CD4-positive, alpha-beta memory T cell (primary cell): ENCODE measurements at regions of chr19 and their contacts with region 1.

Region 1: GRCh38 chr19:49473868-49474544 is at the start of gene FLT3LG:
- DNase-seq: peak; percentile 96 to 97 (median 97)
- H3K4me3 ChIP-seq: peak within 1 kb of the TSS; percentile 77 to 94
- H3K4me3 Mint-ChIP-seq: peak within 1 kb of the TSS; percentile 90 to 99 (median 94)
- H3K27ac ChIP-seq: peak within 1 kb of the TSS; percentile 96
- H3K27ac Mint-ChIP-seq: peak within 1 kb of the TSS; percentile 91 to 99 (median 98)
- H3K4me1 ChIP-seq: peaks cover 64% of the 10 kb centered on the region
- H3K4me1 Mint-ChIP-seq: peaks cover 27 to 71% (median 46%) of the 10 kb centered on the region in 4 donors
- H3K27me3 ChIP-seq: no peaks in the 10 kb centered on the region
- H3K27me3 Mint-ChIP-seq: no peaks in the 10 kb centered on the region
- total RNA-seq, gene FLT3LG: 114 to 115 TPM

Region 2: GRCh38 chr19:49391581-49392399 is 82.2 kb before region 1 on chr19:
- CTCF ChIA-PET with region 1: interaction called, 57 read pairs
- POLR2A ChIA-PET with region 1: interaction called, 20 read pairs
- intact Hi-C with region 1: loop called (anchors 1 kb)
- DNase-seq: peak; percentile 76 to 80 (median 78)
- H3K4me3 ChIP-seq: no peak overlapping the region
- H3K4me3 Mint-ChIP-seq: no peak overlapping the region
- H3K27ac ChIP-seq: no peak overlapping the region
- H3K27ac Mint-ChIP-seq: peak overlapping the region in 6 of 7 donors; percentile 9 to 85 (median 60)
- H3K4me1 ChIP-seq: peaks cover 21% of the 10 kb centered on the region
- H3K4me1 Mint-ChIP-seq: peaks cover 8 to 24% (median 11%) of the 10 kb centered on the region in 4 donors
- H3K27me3 ChIP-seq: no peaks in the 10 kb centered on the region
- H3K27me3 Mint-ChIP-seq: no peaks in the 10 kb centered on the region

Region 3: DNA sequence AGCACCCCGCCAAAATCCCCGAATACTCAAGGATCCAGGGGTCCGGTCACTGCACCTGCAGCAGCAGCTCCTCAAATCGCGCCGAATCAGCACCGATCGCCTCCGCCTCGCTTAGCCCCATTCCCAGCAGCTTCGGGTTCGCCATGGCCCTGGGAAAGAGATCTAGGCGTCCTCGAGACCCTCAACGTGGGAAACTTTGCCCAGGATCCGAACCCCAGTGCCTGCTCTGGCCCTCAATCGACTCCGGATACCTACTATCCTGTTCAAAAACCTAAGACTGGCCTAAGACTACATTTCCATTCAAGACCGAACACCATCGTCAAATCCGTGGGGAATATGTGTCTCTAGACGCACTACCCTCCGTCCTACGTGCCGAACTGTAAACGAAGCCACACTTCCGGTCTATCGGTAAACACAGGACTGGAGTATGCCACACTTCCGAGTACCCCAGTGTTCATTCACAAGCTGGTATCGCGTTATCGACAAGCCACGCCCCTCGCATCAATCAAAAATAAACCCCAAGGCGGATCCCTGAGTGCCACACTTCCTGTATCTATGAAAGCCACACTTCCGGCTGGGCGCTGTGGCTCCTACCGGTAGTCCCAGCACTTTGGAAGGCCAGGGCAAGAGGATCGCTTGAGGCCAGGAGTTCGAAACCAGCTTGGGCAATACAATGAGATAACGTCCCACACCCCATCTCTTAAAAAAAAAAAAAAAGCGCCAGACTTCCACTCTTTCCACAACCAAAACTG is 22.4 kb before region 1 on chr19 and contains the start of gene PIH1D1:
- CTCF ChIA-PET with region 1: interaction called, 227 read pairs
- POLR2A ChIA-PET with region 1: interaction called, 222 read pairs
- intact Hi-C with region 1: loop called (anchors 1 kb)
- DNase-seq: peak; percentile 91 to 98 (median 95)
- H3K4me3 ChIP-seq: peak within 1 kb of the TSS; percentile 66 to 90
- H3K4me3 Mint-ChIP-seq: peak within 1 kb of the TSS; percentile 91 to 100 (median 99)
- H3K27ac ChIP-seq: peak within 1 kb of the TSS; percentile 91
- H3K27ac Mint-ChIP-seq: peak within 1 kb of the TSS; percentile 96 to 100 (median 100)
- H3K4me1 ChIP-seq: peaks cover 37% of the 10 kb centered on the region
- H3K4me1 Mint-ChIP-seq: peaks cover 25 to 70% (median 41%) of the 10 kb centered on the region in 4 donors
- H3K27me3 ChIP-seq: no peaks in the 10 kb centered on the region
- H3K27me3 Mint-ChIP-seq: no peaks in the 10 kb centered on the region
- total RNA-seq, gene PIH1D1: 178 to 186 TPM

Region 4: DNA sequence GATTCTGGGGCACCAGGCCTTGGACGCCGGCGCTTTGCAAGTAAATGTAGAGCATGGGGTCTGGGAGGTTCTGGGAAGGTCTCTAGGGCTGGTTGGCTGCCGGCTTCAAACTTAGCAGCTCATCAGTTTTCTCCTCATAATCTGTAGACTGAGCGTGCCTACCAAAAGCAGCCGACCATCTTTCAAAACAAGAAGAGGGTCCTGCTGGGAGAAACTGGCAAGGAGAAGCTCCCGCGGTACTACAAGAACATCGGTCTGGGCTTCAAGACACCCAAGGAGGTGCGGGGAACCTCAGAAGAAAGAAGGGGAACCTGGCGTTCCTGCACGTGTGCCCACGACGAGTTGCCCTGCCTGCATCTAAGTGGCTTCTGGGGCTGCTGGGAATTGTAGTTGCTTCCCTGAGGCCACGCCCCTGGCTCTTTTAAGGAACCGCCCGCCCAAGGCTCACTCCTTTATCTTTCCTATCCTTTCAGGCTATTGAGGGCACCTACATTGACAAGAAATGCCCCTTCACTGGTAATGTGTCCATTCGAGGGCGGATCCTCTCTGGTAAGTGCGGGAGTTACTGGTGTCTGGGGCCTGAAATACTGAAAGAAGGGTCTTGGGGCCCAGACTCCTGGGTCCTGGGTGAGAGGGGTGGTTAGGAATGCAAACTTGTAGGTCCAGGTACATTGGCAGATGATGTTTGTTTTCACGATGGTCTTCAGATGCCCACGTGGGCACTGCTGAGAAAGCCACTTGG is 23.2 kb after region 1 on chr19:
- CTCF ChIA-PET with region 1: interaction called, 14 read pairs
- POLR2A ChIA-PET with region 1: interaction called, 31 read pairs
- intact Hi-C with region 1: no loop called
- DNase-seq: peak; percentile 79 to 89 (median 83)
- H3K4me3 ChIP-seq: peak overlapping the region; percentile 92 to 99
- H3K4me3 Mint-ChIP-seq: peak overlapping the region; percentile 99 to 100 (median 100)
- H3K27ac ChIP-seq: peak overlapping the region; percentile 95
- H3K27ac Mint-ChIP-seq: peak overlapping the region; percentile 95 to 100 (median 99)
- H3K4me1 ChIP-seq: peaks cover 55% of the 10 kb centered on the region
- H3K4me1 Mint-ChIP-seq: peaks cover 23 to 87% (median 43%) of the 10 kb centered on the region in 4 donors
- H3K27me3 ChIP-seq: no peaks in the 10 kb centered on the region
- H3K27me3 Mint-ChIP-seq: no peaks in the 10 kb centered on the region

Region 5: GRCh38 chr19:49546825-49547565 is 73.0 kb after region 1 on chr19:
- CTCF ChIA-PET with region 1: interaction called, 8 read pairs
- POLR2A ChIA-PET with region 1: interaction called, 7 read pairs
- intact Hi-C with region 1: loop called (anchors 1 kb)
- DNase-seq: peak; percentile 70 to 81 (median 78)
- H3K4me3 ChIP-seq: peak overlapping the region; percentile 4 to 34
- H3K4me3 Mint-ChIP-seq: peak overlapping the region; percentile 43 to 91 (median 84)
- H3K27ac ChIP-seq: no peak overlapping the region
- H3K27ac Mint-ChIP-seq: peak overlapping the region; percentile 40 to 95 (median 90)
- H3K4me1 ChIP-seq: peaks cover 47% of the 10 kb centered on the region
- H3K4me1 Mint-ChIP-seq: peaks cover 27 to 61% (median 39%) of the 10 kb centered on the region in 4 donors
- H3K27me3 ChIP-seq: no peaks in the 10 kb centered on the region
- H3K27me3 Mint-ChIP-seq: no peaks in the 10 kb centered on the region